PC-3 (cell line): ENCODE measurements at regions of chr2 and their contacts with region 1.

Region 1: DNA sequence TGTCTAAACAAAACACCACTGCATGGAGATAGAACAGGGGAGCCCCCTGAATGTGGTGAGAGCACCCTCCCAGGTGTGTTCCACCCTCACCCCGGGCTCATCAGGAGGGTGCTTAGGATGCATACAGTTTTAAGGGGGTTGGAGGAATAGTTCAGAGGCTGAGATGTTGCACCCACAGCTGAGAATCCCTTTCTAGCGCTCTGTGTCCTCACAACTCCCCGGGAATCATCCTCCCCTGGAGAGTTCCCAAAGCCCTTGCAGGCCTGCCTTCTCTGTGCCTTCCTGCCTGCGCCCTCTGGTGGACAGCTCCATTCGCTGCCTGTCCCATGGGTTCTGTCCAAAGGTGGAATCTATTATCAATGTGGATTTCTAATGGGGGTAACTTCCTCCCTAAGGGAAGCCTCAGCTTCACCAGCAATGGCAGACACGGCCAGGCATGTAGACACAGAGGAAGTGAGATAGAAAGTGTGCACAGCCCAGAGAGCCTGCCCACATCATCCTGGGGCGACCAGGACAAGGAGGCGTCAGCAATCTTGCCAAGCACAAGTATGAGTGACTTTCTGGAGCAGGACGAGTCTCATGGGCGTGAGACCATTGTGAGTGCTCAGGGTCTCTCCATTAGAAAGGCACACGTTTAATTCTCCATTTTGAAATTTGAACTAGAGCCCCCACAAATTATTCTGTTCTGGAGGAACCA is 1.2 kb upstream of the UGT1A5 start:
- DNase-seq: peak; percentile 86
- ATAC-seq: peak; percentile 69
- H3K4me3 ChIP-seq: no peak overlapping the region
- H3K27ac ChIP-seq: no peak overlapping the region
- H3K4me1 ChIP-seq: peaks cover 38% of the 10 kb centered on the region
- H3K27me3 ChIP-seq: no peaks in the 10 kb centered on the region
- CTCF ChIP-seq: peak; percentile 92

Region 2: DNA sequence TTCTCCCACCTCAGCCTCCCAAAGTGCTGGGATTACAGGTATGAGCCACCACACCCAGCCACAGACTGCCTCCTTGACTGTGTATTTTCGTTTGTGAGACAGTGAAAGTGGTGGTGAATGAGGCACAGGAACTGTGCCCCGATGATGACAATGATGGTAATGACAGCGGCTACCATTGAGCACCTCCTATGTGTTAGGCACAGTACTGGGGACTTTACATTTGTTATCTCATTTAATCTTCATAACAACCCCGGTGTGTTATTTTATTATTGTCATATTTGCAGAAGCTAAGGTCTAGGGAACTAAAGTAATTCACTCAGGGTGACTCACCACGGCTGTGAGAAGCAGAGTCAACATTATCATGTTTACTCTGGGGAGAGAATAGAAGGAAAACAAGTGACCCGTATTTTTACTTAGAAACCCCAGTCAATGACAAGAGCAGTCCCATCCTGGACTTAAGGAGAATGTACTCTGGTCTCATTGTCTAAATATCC is 1410.5 kb before region 1 on chr2:
- CTCF ChIA-PET with region 1: no interaction called
- POLR2A ChIA-PET with region 1: no interaction called
- intact Hi-C with region 1: no loop called
- DNase-seq: peak; percentile 95
- ATAC-seq: peak; percentile 98
- H3K4me3 ChIP-seq: no peak overlapping the region
- H3K27ac ChIP-seq: peak overlapping the region; percentile 84
- H3K4me1 ChIP-seq: peaks cover 16% of the 10 kb centered on the region
- H3K27me3 ChIP-seq: no peaks in the 10 kb centered on the region
- CTCF ChIP-seq: peak; percentile 50

Region 3: GRCh38 chr2:233449081-233449901 is 262.2 kb before region 1 on chr2:
- CTCF ChIA-PET with region 1: no interaction called
- POLR2A ChIA-PET with region 1: no interaction called
- intact Hi-C with region 1: loop called (anchors 1 kb)
- DNase-seq: peak; percentile 53
- ATAC-seq: peak; percentile 83
- H3K4me3 ChIP-seq: no peak overlapping the region
- H3K27ac ChIP-seq: no peak overlapping the region
- H3K4me1 ChIP-seq: 0 out of 2 replicates have a peak, but pooled peaks cover 3% of the 10 kb centered on the region
- H3K27me3 ChIP-seq: no peaks in the 10 kb centered on the region
- CTCF ChIP-seq: peak; percentile 68

Region 4: DNA sequence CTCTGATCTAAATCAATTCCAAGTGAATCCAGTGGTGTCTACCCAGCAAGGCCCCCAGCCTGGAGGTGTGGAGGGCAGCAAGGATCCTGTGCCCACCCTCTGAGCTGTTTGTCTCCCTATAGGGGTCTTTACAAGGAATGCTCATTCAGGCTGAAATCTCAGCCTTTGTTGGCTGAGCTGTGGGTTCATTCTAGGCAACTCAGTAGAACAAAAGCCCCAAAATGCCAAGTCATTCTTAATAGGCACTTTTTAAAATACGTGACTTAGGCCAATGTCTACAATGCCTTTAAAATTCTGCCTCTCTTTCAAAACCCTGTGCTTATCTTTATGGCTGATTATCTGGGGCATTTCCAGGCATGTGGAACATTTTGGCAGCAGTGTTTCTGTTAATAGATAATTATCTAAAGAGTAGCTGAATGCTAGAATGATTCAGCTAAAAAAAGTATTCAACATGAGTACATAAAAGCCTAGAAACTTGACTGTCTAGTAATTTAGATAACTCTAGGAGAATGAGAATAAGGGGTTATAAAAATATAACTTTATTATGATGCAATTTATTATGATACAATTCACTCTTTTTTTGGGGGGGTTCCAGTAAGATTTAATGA is 11.3 kb before region 1 on chr2:
- CTCF ChIA-PET with region 1: no interaction called
- POLR2A ChIA-PET with region 1: no interaction called
- intact Hi-C with region 1: no loop called
- DNase-seq: peak; percentile 81
- ATAC-seq: peak; percentile 75
- H3K4me3 ChIP-seq: no peak overlapping the region
- H3K27ac ChIP-seq: peak overlapping the region; percentile 91
- H3K4me1 ChIP-seq: peaks cover 10% of the 10 kb centered on the region
- H3K27me3 ChIP-seq: no peaks in the 10 kb centered on the region
- CTCF ChIP-seq: no peak